Left ventricle myocardium superior (tissue), 1 donor: ENCODE measurements at regions of chr14 and their contacts with region 1.

Region 1: GRCh38 chr14:50335389-50335788 is 23.3 kb downstream of the DMAC2L start:
- DNase-seq: peak; percentile 38
- ATAC-seq: peak; percentile 47

Region 2: GRCh38 chr14:50038398-50039119 is 296.8 kb before region 1 on chr14:
- intact Hi-C with region 1: no loop called
- DNase-seq: no peak
- ATAC-seq: peak; percentile 59

Region 3: GRCh38 chr14:50396631-50397390 is 61.4 kb after region 1 on chr14 and contains the start of gene CDKL1:
- intact Hi-C with region 1: loop called (anchors 10 kb)
- DNase-seq: peak; percentile 83
- ATAC-seq: peak; percentile 94
- total RNA-seq, gene CDKL1: 2.0 TPM

Region 4: GRCh38 chr14:50452979-50453705 is 117.8 kb after region 1 on chr14:
- intact Hi-C with region 1: no loop called
- DNase-seq: no peak
- ATAC-seq: no peak